ENCODE measurements at regions of chr14 and their contacts with region 1.

Region 1: GRCh38 chr14:75249251-75249957 is 29.2 kb upstream of the FOS start:
- DNase-seq: peak; percentile 95
- ATAC-seq: peak; percentile 82
- H3K4me3 Mint-ChIP-seq: peak overlapping the region; percentile 44
- H3K27ac Mint-ChIP-seq: peak overlapping the region; percentile 87
- H3K4me1 Mint-ChIP-seq: peaks cover 57% of the 10 kb centered on the region
- H3K27me3 Mint-ChIP-seq: peaks cover 21% of the 10 kb centered on the region

Region 2: DNA sequence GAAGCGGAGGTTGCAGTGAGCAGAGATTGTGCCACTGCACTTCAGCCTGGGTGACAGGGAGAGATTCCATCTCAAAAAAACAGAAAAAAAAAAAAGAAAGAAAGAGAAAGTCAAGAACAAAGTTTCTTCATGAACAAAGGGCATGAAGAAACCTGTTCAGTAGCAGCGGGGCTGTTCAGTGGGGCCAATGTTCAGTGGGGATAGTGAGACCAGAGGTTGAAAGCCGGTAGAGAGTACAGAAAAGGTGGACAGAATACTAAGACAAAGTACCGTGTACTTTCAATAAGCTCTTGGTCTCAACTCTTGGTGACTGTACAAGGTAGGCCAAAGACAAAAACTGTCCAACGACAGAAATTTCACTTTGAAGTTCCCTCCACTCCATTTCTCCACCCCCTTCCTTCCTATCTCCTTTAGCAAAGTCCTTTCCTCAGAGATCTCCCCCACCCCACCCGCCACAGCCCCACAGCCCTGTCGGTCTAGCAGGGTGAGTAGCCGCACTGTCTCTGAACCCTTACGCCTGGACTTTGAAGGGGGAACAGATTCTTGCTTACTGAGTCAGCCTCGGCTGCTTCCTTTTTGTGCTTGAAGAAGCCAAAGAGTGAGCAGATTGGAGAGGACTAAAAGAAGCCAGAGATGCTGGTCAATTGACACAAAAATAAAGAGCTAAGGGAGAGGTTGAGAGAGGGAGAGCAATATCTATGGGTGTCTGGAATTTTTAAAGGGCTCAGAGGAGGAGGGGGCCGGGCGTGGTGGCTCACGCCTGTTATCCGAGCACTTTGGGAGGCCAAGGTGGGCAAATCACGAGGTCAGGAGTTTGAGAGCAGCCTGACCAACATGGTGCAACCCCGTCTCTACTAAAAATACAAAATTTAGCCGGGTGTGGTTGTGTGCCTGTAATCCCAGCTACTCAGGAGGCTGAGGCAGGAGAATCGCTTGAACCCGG is 15.0 kb before region 1 on chr14:
- CTCF ChIA-PET with region 1: interaction called, 18 read pairs
- POLR2A ChIA-PET with region 1: interaction called, 3 read pairs
- DNase-seq: no peak
- ATAC-seq: no peak
- H3K4me3 Mint-ChIP-seq: no peak overlapping the region
- H3K27ac Mint-ChIP-seq: no peak overlapping the region
- H3K4me1 Mint-ChIP-seq: peaks cover 31% of the 10 kb centered on the region
- H3K27me3 Mint-ChIP-seq: peaks cover 17% of the 10 kb centered on the region